ENCODE measurements at regions of chr15 and their contacts with region 1.

Region 1: GRCh38 chr15:40454904-40455391 is 14.2 kb downstream of the BAHD1 start:
- DNase-seq: no peak
- H3K4me3 Mint-ChIP-seq: no peak overlapping the region
- H3K27ac Mint-ChIP-seq: peak overlapping the region; percentile 85
- H3K4me1 Mint-ChIP-seq: peaks cover 56% of the 10 kb centered on the region
- H3K27me3 Mint-ChIP-seq: no peaks in the 10 kb centered on the region

Region 2: GRCh38 chr15:40470423-40471104 is 15.6 kb after region 1 on chr15 and contains the start of gene CHST14:
- CTCF ChIA-PET with region 1: no interaction called
- POLR2A ChIA-PET with region 1: interaction called, 15 read pairs
- DNase-seq: peak; percentile 69
- H3K4me3 Mint-ChIP-seq: peak within 1 kb of the TSS; percentile 92
- H3K27ac Mint-ChIP-seq: peak within 1 kb of the TSS; percentile 79
- H3K4me1 Mint-ChIP-seq: peaks cover 31% of the 10 kb centered on the region
- H3K27me3 Mint-ChIP-seq: peaks cover 1% of the 10 kb centered on the region
- total RNA-seq, gene CHST14: 13.9 to 15.9 TPM

Region 3: DNA sequence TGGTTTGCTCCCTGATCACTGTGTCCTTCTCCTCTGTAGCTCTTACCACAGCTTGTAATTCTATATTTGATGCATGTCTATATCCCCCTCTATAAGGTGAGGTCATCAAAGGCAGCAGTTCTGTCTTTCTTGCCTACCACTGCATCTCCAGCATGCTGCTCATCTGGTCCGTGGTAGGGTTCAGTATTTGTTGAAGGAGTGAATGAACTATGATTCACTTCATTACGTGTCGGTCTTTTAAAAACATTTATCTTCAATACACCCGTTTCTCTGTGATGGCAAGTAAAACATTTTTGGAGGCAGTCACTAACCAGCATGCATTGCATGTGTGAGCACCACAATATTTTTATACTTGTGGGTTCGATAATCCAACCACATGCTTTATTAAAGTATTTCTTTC is 43.5 kb after region 1 on chr15:
- CTCF ChIA-PET with region 1: no interaction called
- POLR2A ChIA-PET with region 1: no interaction called
- DNase-seq: no peak
- H3K4me3 Mint-ChIP-seq: no peak overlapping the region
- H3K27ac Mint-ChIP-seq: no peak overlapping the region
- H3K4me1 Mint-ChIP-seq: peaks cover 21% of the 10 kb centered on the region
- H3K27me3 Mint-ChIP-seq: peaks cover 19% of the 10 kb centered on the region